Dendritic cell treated with granulocyte-macrophage colony-stimulating factor and Interleukin-4, amounts not matched to agents 40 ng/mL and 50 ng/mL, for 4 days (primary cell): ENCODE measurements at regions of chr14 and their contacts with region 1.

Region 1: GRCh38 chr14:64914237-64914971 is at the start of gene CHURC1:
- H3K4me3 Mint-ChIP-seq: peak within 1 kb of the TSS; percentile 88
- H3K27ac Mint-ChIP-seq: peak within 1 kb of the TSS; percentile 97
- H3K4me1 Mint-ChIP-seq: peaks cover 39% of the 10 kb centered on the region
- H3K27me3 Mint-ChIP-seq: peaks cover 2% of the 10 kb centered on the region

Region 2: GRCh38 chr14:64503478-64504309 is 410.7 kb before region 1 on chr14 and contains the start of gene ZBTB25:
- intact Hi-C with region 1: loop called (anchors 10 kb)
- H3K4me3 Mint-ChIP-seq: peak within 1 kb of the TSS; percentile 86
- H3K27ac Mint-ChIP-seq: peak within 1 kb of the TSS; percentile 100
- H3K4me1 Mint-ChIP-seq: peaks cover 53% of the 10 kb centered on the region
- H3K27me3 Mint-ChIP-seq: no peaks in the 10 kb centered on the region

Region 3: DNA sequence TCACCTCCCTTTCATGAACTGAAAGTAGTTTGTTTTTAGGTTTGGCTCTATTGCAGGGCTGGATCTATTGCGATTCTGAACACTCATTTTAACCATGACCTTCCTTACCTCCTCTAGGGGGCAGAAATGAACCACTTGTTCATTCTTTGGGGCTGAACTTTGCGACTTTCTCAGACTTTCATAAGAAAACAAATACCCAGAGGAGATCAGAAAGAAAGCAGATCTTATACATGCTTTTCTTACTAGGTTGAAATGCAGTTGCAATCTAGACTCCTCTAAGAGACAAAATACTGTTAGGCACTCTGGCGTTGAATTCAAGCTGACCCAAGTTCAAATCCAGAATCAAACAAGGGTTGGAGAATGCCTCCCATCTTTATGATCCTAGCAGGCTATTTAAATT is 242.8 kb before region 1 on chr14:
- intact Hi-C with region 1: no loop called
- H3K4me3 Mint-ChIP-seq: no peak overlapping the region
- H3K27ac Mint-ChIP-seq: no peak overlapping the region
- H3K4me1 Mint-ChIP-seq: peaks cover 33% of the 10 kb centered on the region
- H3K27me3 Mint-ChIP-seq: peaks cover 2% of the 10 kb centered on the region

Region 4: GRCh38 chr14:64745511-64746091 is 168.8 kb before region 1 on chr14:
- intact Hi-C with region 1: no loop called
- H3K4me3 Mint-ChIP-seq: no peak overlapping the region
- H3K27ac Mint-ChIP-seq: no peak overlapping the region
- H3K4me1 Mint-ChIP-seq: peaks cover 7% of the 10 kb centered on the region
- H3K27me3 Mint-ChIP-seq: no peaks in the 10 kb centered on the region

Region 5: GRCh38 chr14:64764641-64765520 is 149.5 kb before region 1 on chr14:
- intact Hi-C with region 1: loop called (anchors 10 kb)
- H3K4me3 Mint-ChIP-seq: peak overlapping the region; percentile 60
- H3K27ac Mint-ChIP-seq: no peak overlapping the region
- H3K4me1 Mint-ChIP-seq: peaks cover 14% of the 10 kb centered on the region
- H3K27me3 Mint-ChIP-seq: peaks cover 43% of the 10 kb centered on the region

Region 6: GRCh38 chr14:65102441-65103149 is 188.2 kb after region 1 on chr14 and contains the start of gene MAX:
- intact Hi-C with region 1: loop called (anchors 2 kb)
- H3K4me3 Mint-ChIP-seq: peak within 1 kb of the TSS; percentile 80
- H3K27ac Mint-ChIP-seq: peak within 1 kb of the TSS; percentile 81
- H3K4me1 Mint-ChIP-seq: peaks cover 18% of the 10 kb centered on the region
- H3K27me3 Mint-ChIP-seq: no peaks in the 10 kb centered on the region